Heart left ventricle (tissue), 16 donors: ENCODE measurements at regions of chr10 and their contacts with region 1.

Region 1: DNA sequence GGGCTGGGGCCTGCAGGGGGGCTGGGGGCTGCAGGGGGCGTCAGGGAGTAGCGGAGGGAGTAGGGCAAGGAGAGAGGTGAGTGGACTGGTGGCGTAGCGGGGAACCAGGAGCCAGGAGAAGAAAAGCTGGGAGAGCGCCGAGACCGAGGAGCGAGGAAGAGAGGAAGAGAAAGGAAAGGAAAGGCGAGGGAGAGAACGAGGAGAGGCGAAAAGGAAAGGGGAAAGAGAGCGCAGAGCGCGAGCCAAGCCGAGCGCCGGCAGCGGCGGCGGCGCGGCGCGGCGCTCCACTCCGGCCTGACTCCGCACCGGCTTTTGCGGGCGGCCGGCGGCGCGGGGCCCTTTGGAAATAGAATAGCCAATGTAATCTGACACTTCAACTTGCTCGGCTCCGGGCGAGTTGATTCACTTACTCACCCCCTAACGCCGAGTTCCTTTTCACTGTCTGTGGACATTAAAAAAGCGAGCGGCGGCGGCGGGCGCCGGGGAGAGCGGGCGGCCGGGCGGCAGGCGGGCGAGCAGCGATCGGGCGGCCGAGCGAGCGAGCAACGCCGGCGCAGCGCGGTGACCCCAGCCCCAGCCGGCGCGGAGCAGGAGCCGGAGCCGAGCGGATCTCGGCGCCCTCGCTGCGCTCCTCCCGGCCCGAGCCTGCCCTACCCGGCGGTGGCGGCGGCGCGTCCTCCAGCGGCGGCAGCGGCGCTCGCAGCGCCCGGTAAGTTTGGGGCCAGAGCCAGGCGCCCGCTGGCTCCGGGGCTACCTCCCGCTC is at the start of gene ZMIZ1:
- DNase-seq: peak; percentile 91 to 94 (median 92)
- ATAC-seq: peak; percentile 27 to 54 (median 43)
- H3K4me3 ChIP-seq: peak within 1 kb of the TSS; percentile 76 to 99 (median 92)
- H3K27ac ChIP-seq: peak within 1 kb of the TSS; percentile 95 to 100 (median 98)
- H3K4me1 ChIP-seq: peaks cover 10 to 48% (median 41%) of the 10 kb centered on the region in 12 donors
- H3K27me3 ChIP-seq: no peaks in the 10 kb centered on the region
- CTCF ChIP-seq: peak in 6 of 12 donors; percentile 6 to 50 (median 36)
- POLR2A ChIP-seq: peak; percentile 37 to 90
- total RNA-seq, gene ZMIZ1: 39.8 to 75.4 (median 50.5) TPM

Region 2: DNA sequence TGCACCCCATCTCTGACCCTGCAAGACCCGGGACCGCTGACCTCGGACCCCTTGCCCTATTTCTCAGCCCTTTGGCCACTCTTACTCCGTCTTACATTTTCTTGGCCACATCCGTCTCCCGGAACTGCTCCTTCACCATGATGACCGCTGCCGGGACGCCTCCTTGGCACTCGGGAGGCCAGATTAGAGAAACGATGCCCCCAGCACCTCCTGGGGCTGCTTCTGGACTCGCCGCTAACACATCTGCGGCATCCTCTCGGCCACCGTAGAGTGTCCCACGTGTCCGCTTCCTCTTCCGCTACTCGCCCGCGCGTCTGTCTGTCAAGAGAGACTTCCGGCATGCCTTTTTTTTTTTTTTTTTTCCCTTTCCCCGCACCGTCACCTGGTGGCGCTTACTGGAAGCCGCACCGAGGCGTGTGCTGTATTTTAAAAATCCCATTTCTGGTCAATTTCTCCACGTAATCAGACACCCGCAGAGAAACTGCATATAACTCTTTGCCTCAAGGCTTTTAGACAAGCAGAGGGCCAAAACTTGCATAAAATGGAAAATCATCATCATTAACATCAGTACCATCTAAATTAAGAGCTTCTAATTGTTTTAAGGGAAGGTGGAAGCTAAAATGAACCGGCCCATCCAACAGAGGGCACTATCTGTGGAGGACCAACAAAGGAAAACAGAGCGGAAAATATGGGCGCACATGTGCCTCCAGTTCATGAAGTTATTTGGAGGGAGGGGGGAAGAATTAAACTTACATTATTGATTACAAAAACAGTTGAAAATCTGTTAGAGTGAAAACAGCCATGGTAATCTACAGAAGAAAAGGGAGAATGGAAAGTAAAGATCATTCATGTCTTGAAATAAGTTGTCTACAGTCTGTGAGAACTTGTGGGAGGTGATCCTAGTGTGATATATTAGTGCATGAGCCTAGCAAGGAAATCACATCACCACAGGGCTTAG is 1039.2 kb before region 1 on chr10 and contains the start of gene POLR3A:
- intact Hi-C with region 1: loop called in 1 of 10 experiments (anchors 5 kb)
- DNase-seq: peak; percentile 96 to 99 (median 97)
- ATAC-seq: peak; percentile 68 to 82 (median 76)
- H3K4me3 ChIP-seq: peak within 1 kb of the TSS; percentile 59 to 99 (median 88)
- H3K27ac ChIP-seq: peak within 1 kb of the TSS; percentile 46 to 90 (median 80)
- H3K4me1 ChIP-seq: peaks cover 3 to 29% (median 18%) of the 10 kb centered on the region in 12 donors
- H3K27me3 ChIP-seq: no peaks in the 10 kb centered on the region
- CTCF ChIP-seq: peak; percentile 49 to 86 (median 66)
- POLR2A ChIP-seq: peak in 1 of 2 donors; percentile 40
- total RNA-seq, gene POLR3A: 7.9 to 12.9 (median 9.6) TPM

Region 3: DNA sequence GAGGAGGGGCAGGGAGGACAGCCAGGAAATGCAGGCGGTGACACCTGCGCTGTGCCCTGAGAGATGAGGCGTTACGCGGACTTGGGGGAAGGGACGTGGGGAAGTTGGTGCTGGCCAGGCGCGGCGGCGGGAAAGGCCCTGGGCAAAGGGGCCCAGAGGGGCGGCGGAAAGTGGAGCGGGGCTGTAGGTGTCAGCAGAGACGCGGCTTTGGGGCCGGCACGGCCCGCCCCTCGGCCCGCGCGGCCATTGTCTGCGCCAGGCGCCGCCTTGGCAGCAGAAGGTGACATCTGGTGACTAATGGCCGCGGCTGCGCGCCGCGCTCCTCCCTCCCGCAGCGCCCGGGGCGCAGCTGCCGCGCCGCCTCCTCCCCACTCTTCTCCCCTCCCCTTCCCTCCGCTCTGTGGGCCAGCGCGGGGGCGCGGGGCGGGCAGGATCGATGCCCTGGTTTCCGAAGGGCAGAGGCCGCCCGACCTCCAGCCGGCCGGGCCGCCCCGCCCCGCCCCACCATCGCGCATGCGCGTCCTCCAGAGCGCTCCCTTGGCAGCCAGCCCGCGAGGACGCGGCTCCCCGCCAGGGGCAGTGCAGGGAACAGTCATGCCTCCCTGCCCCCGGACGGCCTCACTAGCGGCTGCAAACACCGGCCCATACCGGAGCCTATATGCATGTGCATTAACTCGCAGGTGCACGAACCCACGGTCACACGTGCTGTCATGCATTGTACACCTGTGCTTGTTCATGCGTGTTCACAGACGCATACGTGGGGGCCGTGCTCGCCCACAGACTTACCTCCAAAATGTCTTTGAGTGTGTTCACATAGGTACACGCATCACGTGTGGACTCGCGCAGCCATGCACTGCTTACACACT is 765.5 kb before region 1 on chr10:
- intact Hi-C with region 1: loop called in 2 of 10 experiments (anchors 10 kb)
- DNase-seq: peak; percentile 94 to 97 (median 95)
- ATAC-seq: peak; percentile 96 to 99 (median 98)
- H3K4me3 ChIP-seq: peak overlapping the region; percentile 12 to 68 (median 60)
- H3K27ac ChIP-seq: peak overlapping the region; percentile 83 to 92 (median 87)
- H3K4me1 ChIP-seq: peaks cover 0 to 20% (median 11%) of the 10 kb centered on the region in 12 donors
- H3K27me3 ChIP-seq: no peaks in the 10 kb centered on the region
- CTCF ChIP-seq: peak; percentile 59 to 81 (median 69)
- POLR2A ChIP-seq: peak; percentile 3 to 78

Region 4: GRCh38 chr10:78623578-78624215 is 445.0 kb before region 1 on chr10:
- intact Hi-C with region 1: no loop called
- DNase-seq: peak in 1 of 5 donors; percentile 48
- ATAC-seq: peak; percentile 64 to 95 (median 88)
- H3K4me3 ChIP-seq: no peak overlapping the region
- H3K27ac ChIP-seq: peak overlapping the region in 6 of 12 donors; percentile 3 to 61 (median 32)
- H3K4me1 ChIP-seq: peaks cover 0 to 13% (median 5%) of the 10 kb centered on the region in 12 donors
- H3K27me3 ChIP-seq: no peaks in the 10 kb centered on the region
- CTCF ChIP-seq: no peak
- POLR2A ChIP-seq: no peak

Region 5: GRCh38 chr10:78777466-78777865 is 291.3 kb before region 1 on chr10:
- intact Hi-C with region 1: loop called in 1 of 10 experiments (anchors 5 kb)
- DNase-seq: peak in 4 of 5 donors; percentile 66 to 83 (median 74)
- ATAC-seq: peak; percentile 80 to 84 (median 82)
- H3K4me3 ChIP-seq: no peak overlapping the region
- H3K27ac ChIP-seq: peak overlapping the region; percentile 37 to 88 (median 77)
- H3K4me1 ChIP-seq: peaks cover 4 to 50% (median 26%) of the 10 kb centered on the region in 12 donors
- H3K27me3 ChIP-seq: no peaks in the 10 kb centered on the region
- CTCF ChIP-seq: no peak
- POLR2A ChIP-seq: no peak

Region 6: GRCh38 chr10:78852466-78853240 is 216.1 kb before region 1 on chr10:
- intact Hi-C with region 1: loop called in 4 of 10 experiments (anchors 5 to 10 kb)
- DNase-seq: no peak
- ATAC-seq: peak in 1 of 4 donors; percentile 29
- H3K4me3 ChIP-seq: no peak overlapping the region
- H3K27ac ChIP-seq: no peak overlapping the region
- H3K4me1 ChIP-seq: peaks cover 0 to 17% (median 9%) of the 10 kb centered on the region in 12 donors
- H3K27me3 ChIP-seq: no peaks in the 10 kb centered on the region
- CTCF ChIP-seq: peak in 9 of 12 donors; percentile 15 to 45 (median 30)
- POLR2A ChIP-seq: no peak

Region 7: DNA sequence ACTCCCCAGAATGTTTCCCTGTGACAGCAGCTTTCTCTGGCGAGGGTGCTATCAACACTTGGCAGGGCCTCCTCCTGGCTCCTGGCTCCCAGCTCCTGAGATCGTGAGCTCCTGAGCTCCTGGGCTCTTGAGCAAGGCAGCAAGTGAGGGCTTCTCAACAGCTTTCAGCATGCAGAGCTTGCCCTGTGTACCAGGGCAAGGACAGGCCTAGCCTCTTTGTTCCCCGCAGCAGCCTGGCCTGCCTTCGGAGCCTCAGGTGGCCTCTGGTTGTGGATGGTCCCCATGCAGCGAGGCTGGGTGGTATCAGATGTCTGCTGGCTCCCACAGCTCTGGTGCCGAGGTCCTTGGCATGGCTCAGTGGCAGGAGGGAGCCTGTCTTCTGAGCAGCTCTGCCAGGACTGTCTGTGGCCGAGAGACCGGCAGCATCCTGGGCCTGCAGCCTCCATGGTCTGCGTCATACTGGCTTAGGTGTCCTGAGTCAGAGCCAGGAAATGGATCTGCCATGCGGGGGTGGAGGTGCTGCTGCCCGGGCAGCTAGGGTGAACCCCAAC is 44.2 kb after region 1 on chr10:
- intact Hi-C with region 1: loop called in 3 of 10 experiments (anchors 5 kb)
- DNase-seq: peak in 3 of 5 donors; percentile 56 to 89 (median 71)
- ATAC-seq: peak; percentile 39 to 81 (median 68)
- H3K4me3 ChIP-seq: no peak overlapping the region
- H3K27ac ChIP-seq: peak overlapping the region; percentile 22 to 96 (median 86)
- H3K4me1 ChIP-seq: peaks cover 22 to 99% (median 86%) of the 10 kb centered on the region in 12 donors
- H3K27me3 ChIP-seq: no peaks in the 10 kb centered on the region
- CTCF ChIP-seq: no peak
- POLR2A ChIP-seq: no peak

Region 8: GRCh38 chr10:79155301-79156081 is 86.7 kb after region 1 on chr10:
- intact Hi-C with region 1: loop called in 1 of 10 experiments (anchors 2 kb)
- DNase-seq: peak in 3 of 5 donors; percentile 72 to 74 (median 73)
- ATAC-seq: peak in 2 of 4 donors; percentile 2 to 13
- H3K4me3 ChIP-seq: no peak overlapping the region
- H3K27ac ChIP-seq: peak overlapping the region; percentile 62 to 98 (median 94)
- H3K4me1 ChIP-seq: peaks cover 55 to 100% (median 99%) of the 10 kb centered on the region in 12 donors
- H3K27me3 ChIP-seq: no peaks in the 10 kb centered on the region
- CTCF ChIP-seq: peak in 7 of 12 donors; percentile 18 to 52 (median 25)
- POLR2A ChIP-seq: no peak